ENCODE measurements at regions of chr2 and their contacts with region 1.

Region 1: GRCh38 chr2:102473020-102473419 is at the start of gene SLC9A4:
- DNase-seq: no peak
- H3K4me3 ChIP-seq: no peak within 1 kb of the TSS
- H3K27ac ChIP-seq: no peak within 1 kb of the TSS
- H3K4me1 ChIP-seq: no peaks in the 10 kb centered on the region
- H3K27me3 ChIP-seq: no peaks in the 10 kb centered on the region
- CTCF ChIP-seq: peak; percentile 40 to 76 (median 59)
- total RNA-seq, gene SLC9A4: not detected

Region 2: DNA sequence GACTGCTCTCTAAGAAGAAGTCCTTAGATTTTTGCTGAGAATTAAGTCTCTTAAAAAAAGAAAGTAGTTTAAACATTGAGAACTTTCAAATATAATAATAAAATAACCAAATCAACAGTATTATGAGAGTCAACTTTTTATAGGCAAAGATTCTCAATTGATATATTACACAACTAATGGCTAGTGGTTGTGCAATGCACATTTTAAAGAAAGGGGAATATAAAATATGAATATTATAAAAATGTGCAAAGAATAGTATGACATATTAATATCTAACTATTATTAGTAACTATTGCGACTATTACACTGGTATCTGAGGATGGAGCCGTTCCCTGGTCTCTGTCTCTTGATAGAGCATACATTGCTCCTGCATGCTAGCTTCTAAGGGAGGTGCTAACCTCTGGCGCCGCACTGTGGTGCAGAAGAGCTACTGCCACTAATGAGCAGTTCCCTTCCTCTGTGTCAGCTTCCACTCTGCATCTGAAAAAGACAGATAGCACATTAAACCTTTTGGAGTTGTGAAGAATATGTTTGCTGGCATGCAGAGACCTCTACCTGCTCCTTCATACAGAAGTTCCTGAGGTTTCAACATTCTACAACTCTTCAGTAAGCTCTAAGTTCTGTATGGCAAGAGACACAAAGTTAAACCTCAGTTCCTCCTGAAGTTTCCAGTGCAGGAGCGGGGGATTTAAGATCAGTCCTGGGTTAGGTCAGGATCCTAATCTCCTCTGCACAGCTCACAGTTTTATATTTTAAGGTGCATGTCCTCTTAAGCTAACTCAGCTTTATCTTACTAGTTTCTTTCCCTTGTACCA is 142.8 kb after region 1 on chr2:
- intact Hi-C with region 1: loop called (anchors 2 kb)
- DNase-seq: no peak
- H3K4me3 ChIP-seq: no peak overlapping the region
- H3K27ac ChIP-seq: no peak overlapping the region
- H3K4me1 ChIP-seq: peaks cover 0 to 8% of the 10 kb centered on the region in 2 donors
- H3K27me3 ChIP-seq: no peaks in the 10 kb centered on the region
- CTCF ChIP-seq: peak; percentile 39 to 65 (median 56)

Region 3: GRCh38 chr2:102703748-102704147 is 230.7 kb after region 1 on chr2:
- intact Hi-C with region 1: loop called (anchors 10 kb)
- DNase-seq: no peak
- H3K4me3 ChIP-seq: no peak overlapping the region
- H3K27ac ChIP-seq: no peak overlapping the region
- H3K4me1 ChIP-seq: no peaks in the 10 kb centered on the region
- H3K27me3 ChIP-seq: no peaks in the 10 kb centered on the region
- CTCF ChIP-seq: no peak

Measured in ascending aorta (tissue), 2 donors.